CD8-positive, alpha-beta memory T cell (primary cell): ENCODE measurements at regions of chr10 and their contacts with region 1.

Region 1: GRCh38 chr10:92822060-92822634 is 26.2 kb upstream of the EXOC6 start:
- DNase-seq: no peak
- H3K4me3 ChIP-seq: no peak overlapping the region
- H3K4me3 Mint-ChIP-seq: no peak overlapping the region
- H3K27ac ChIP-seq: peak overlapping the region; percentile 24
- H3K27ac Mint-ChIP-seq: peak overlapping the region in 1 of 8 donors; percentile 27
- H3K4me1 ChIP-seq: no peaks in the 10 kb centered on the region
- H3K4me1 Mint-ChIP-seq: peaks cover 6 to 7% (median 6%) of the 10 kb centered on the region in 3 donors
- H3K27me3 ChIP-seq: no peaks in the 10 kb centered on the region
- H3K27me3 Mint-ChIP-seq: peaks cover 0 to 3% of the 10 kb centered on the region in 2 donors

Region 2: GRCh38 chr10:92799591-92800446 is 22.3 kb before region 1 on chr10:
- CTCF ChIA-PET with region 1: no interaction called
- POLR2A ChIA-PET with region 1: no interaction called
- DNase-seq: no peak
- H3K4me3 ChIP-seq: no peak overlapping the region
- H3K4me3 Mint-ChIP-seq: no peak overlapping the region
- H3K27ac ChIP-seq: no peak overlapping the region
- H3K27ac Mint-ChIP-seq: no peak overlapping the region
- H3K4me1 ChIP-seq: no peaks in the 10 kb centered on the region
- H3K4me1 Mint-ChIP-seq: no peaks in the 10 kb centered on the region
- H3K27me3 ChIP-seq: no peaks in the 10 kb centered on the region
- H3K27me3 Mint-ChIP-seq: peaks cover 1 to 15% of the 10 kb centered on the region in 2 donors

Region 3: DNA sequence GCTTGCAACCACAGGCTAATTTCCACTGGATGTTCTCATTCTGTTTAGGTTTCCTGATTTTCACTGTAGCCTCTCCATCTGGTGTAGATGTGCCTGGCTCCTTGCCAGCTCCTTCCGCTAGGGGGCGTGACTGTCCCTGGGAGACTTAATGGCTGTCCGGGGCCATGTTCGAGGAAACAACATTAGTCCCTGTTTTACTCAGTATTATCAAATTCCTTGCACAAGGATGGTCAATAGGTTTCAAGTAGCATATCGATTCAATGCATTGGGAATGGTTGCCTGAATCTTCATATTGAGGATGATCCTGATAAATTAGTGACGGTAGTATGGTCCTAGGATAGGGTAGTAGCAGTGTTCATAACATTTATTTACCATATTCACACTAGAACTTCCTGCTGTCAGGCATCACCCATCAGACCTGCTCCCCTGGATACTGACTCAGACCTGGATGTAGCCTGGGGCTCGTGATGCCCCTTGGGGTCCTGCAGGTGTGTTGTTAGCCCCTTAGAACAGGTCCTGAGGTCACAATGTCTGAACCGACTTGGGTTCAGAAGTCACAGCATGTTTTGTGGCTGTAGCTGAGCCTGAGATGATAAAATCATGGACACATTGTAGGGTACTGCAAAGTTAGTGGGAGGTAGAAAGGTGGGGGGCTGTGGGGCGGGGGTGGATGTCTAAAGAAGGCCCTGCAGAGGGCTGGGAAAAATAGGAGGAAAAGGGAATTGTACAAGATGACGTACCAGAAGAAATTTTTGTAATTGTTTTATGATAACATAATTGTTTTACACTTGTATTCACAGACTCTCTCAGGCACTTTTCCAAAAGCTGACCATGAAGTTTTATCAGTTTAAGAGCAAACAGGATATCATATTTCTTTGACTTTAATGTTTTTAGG is 17.3 kb after region 1 on chr10:
- CTCF ChIA-PET with region 1: interaction called, 12 read pairs
- POLR2A ChIA-PET with region 1: no interaction called
- DNase-seq: peak; percentile 9 to 60 (median 17)
- H3K4me3 ChIP-seq: no peak overlapping the region
- H3K4me3 Mint-ChIP-seq: no peak overlapping the region
- H3K27ac ChIP-seq: no peak overlapping the region
- H3K27ac Mint-ChIP-seq: no peak overlapping the region
- H3K4me1 ChIP-seq: no peaks in the 10 kb centered on the region
- H3K4me1 Mint-ChIP-seq: peaks cover 0 to 2% (median 0%) of the 10 kb centered on the region in 3 donors
- H3K27me3 ChIP-seq: no peaks in the 10 kb centered on the region
- H3K27me3 Mint-ChIP-seq: no peaks in the 10 kb centered on the region

Region 4: DNA sequence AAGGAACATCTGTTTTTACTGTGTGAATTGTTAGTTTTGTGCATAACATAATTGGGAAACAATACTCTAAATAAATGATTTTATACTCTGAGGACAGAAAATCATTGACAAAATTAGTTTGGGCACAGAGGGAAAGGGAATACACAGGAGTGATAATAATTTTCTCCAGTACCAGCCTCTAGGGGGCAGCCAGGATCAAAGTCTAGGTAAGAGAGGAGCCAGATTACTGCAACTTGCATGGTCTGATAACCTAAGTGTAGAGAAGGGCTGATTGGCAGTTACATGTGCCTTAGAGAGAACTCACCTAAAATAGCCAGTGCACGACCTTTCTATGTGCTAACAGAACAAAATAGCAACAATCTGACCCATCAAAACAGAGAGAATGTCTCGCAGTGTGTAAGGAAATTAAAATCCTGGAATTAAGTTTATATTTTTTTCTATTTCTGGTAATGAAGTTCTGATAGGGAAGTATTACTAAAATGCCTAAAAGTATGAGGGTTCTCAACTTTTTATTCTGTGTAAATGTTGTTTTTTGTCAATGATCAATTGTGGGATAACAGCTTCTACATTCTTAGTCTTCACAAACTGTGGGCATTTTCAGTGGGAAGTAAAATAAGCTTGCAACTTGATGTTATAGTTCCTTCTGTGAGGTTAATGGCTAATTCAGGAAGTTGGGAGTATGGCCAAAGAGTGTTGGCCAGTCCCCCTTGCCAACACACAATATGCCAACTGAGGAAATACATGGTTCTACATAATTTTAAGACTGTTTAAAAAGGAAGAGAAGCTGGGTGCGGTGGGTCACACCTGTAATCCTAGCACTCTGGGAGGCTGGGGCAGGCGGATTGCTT is 92.6 kb after region 1 on chr10:
- CTCF ChIA-PET with region 1: no interaction called
- POLR2A ChIA-PET with region 1: no interaction called
- DNase-seq: peak in 4 of 5 donors; percentile 9 to 24 (median 15)
- H3K4me3 ChIP-seq: no peak overlapping the region
- H3K4me3 Mint-ChIP-seq: no peak overlapping the region
- H3K27ac ChIP-seq: no peak overlapping the region
- H3K27ac Mint-ChIP-seq: peak overlapping the region in 1 of 8 donors; percentile 65
- H3K4me1 ChIP-seq: no peaks in the 10 kb centered on the region
- H3K4me1 Mint-ChIP-seq: peaks cover 0 to 5% (median 0%) of the 10 kb centered on the region in 3 donors
- H3K27me3 ChIP-seq: no peaks in the 10 kb centered on the region
- H3K27me3 Mint-ChIP-seq: no peaks in the 10 kb centered on the region